Right ventricle myocardium inferior (tissue), 1 donor: ENCODE measurements at regions of chr4 and their contacts with region 1.

Region 1: DNA sequence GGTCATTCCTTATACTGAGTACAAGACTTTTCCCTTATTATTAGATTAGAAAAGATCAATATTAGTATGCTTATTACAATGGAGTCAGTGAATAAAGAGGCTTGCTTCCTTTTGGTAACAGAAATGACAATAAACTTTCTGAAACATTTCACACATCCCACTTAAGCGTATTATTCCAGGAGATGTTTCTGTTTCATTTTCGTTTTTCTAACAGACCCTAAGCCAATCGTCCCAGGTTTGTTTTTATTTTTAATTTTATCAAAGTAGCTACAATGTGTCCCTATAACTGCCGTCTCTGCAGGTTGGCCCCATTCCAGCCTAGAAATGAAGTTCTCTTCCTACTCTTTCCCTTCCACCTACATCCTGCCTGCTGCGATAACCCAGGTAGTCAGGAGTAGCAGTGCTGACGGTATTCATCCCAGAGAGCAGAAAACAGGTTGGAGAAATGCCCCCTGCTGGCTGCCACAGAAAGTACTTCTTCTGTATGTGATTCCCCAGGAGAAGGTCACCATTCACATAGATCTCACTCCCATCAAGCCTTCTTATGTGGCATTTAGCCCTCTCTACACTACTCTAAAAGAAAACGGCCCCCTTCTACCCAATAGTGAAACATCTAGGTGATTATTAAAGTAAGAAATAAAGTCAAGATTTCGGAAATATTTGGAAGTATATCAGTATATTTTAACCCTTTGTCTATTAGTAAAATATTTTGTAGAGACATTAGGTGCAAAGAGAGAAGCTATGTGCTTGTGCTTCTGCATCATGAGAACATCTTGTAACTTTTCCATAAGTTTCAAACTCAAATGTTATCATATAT is 40.4 kb downstream of the ENPEP start:
- DNase-seq: no peak
- ATAC-seq: peak; percentile 73

Region 2: GRCh38 chr4:109998867-109999584 is 517.3 kb before region 1 on chr4:
- intact Hi-C with region 1: loop called (anchors 2 kb)
- DNase-seq: no peak
- ATAC-seq: no peak

Region 3: DNA sequence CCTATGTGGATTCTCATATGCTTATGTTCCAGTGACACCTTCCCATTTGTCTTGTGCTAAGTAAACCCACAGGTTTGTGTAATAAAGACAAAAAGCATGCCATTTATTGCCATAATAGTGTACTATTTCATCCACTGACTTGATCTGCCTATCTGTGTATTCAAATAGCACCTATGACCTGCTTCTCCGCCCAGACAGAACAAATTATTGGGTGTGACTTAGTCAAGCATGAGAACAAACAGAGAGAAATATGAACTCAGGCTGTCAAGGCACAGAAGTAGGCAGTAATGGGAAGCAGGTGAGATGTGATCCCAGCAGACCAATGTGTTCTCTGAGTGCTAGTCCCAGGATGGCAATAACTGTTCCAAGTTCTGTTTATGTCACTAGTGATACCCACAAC is 343.3 kb before region 1 on chr4:
- intact Hi-C with region 1: no loop called
- DNase-seq: no peak
- ATAC-seq: no peak

Region 4: GRCh38 chr4:110310795-110311194 is 205.5 kb before region 1 on chr4:
- intact Hi-C with region 1: loop called (anchors 2 kb)
- DNase-seq: no peak
- ATAC-seq: no peak

Region 5: GRCh38 chr4:110442156-110442703 is 74.1 kb before region 1 on chr4:
- intact Hi-C with region 1: loop called (anchors 10 kb)
- DNase-seq: no peak
- ATAC-seq: no peak

Region 6: DNA sequence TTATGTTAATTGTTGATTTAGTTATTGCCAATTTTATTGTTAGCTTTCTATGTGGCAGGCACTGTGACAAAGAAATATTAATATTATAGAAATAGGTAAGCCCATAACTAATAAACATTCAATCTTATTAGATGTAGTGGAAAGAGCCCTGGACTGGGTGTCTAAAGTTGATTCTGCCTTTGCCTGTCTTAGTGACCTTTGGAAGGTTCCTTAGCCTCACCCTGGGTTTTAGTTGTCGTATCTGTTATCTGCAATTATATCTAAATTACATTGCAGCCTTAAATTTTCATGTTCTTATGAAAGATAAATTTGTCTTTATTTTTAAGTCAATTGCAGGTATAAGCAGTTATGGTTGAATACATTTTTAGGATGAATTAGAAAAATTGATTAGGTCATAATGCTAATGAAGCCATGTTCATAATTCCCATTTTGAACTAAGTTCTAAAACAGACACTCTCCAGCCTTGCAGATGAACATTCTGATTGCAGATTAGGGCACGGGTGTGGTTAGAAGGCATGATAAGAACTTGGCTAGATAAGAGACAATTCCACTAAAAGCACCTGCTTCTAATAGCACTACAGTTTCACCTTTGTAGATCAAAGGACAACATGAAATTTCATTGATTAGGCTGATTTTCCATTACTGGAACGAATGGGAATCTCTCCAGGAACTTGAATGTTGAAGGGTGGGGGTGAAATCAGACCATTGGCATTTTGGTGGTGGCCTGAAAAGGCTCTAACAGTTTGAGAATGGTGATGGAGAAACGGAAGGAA is 57.6 kb before region 1 on chr4:
- intact Hi-C with region 1: no loop called
- DNase-seq: no peak
- ATAC-seq: no peak

Region 7: DNA sequence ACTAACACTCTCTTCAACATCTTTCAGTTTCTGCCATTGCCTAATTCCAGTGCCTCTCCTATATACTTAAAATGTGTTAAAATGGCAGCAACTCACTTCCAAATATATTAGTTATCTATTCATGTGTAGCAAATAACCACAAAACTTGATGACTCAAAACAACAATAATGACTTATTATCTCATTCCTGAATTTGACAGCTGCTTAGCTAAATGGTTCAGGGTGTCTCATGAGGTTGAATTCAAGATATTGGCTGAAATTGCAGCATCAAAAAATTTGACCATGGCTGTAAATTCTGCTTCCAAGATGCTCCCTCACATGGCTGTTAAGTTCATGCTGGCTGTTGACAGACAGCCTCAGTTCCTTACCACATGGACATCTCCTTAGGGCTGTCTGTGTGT is 81.3 kb after region 1 on chr4:
- intact Hi-C with region 1: no loop called
- DNase-seq: no peak
- ATAC-seq: no peak